ENCODE measurements at regions of chr10 and their contacts with region 1.

Region 1: DNA sequence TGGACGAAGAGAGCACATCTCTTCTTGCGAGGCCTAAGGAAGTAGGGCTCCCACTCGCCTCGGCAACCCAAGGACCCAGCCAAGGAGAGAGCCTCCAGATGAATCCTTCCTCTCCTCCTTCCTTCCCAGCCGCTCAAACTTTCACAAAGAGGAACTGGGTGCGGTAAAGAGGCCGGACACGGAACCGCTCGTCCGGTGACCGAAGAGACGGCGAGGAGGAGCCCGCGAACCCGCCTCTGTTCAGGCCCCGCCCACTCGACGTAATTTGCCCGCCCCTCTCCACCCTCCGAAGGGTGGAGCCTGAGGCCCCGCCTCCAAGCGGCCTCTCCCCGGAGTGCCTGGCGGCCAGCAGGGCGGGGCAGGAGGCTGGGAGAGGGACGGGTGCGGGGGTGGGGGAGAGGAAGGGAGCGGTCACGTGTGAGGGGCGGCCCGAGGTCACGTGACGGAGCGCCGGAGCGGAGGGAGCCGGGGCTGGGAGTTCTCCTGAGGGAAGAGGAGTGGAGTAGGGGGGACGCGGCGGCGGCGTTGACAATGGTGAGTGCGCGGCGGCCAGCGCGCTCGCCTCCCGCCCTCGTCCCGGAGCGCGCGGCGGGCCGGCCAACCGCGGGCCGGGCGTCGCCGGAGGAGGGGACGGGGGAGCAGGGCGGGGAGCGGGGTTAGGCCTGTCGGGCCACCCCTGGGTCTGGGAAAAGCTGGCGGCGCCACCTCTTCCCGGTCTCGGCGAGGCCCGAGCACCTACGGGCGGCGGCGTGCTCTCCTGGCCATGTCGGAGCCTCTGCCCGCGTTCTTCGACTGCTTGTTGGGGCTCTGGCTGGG is at the start of gene VPS26A:
- DNase-seq: peak; percentile 97 to 100 (median 99)
- ATAC-seq: peak; percentile 99
- H3K4me3 ChIP-seq: peak within 1 kb of the TSS; percentile 85
- H3K4me3 Mint-ChIP-seq: peak within 1 kb of the TSS; percentile 93 to 99 (median 96)
- H3K27ac ChIP-seq: peak within 1 kb of the TSS; percentile 94
- H3K27ac Mint-ChIP-seq: peak within 1 kb of the TSS; percentile 92 to 98 (median 97)
- H3K4me1 ChIP-seq: peaks cover 8 to 16% of the 10 kb centered on the region in 2 donors
- H3K4me1 Mint-ChIP-seq: peaks cover 5 to 37% (median 35%) of the 10 kb centered on the region in 7 donors
- H3K27me3 ChIP-seq: no peaks in the 10 kb centered on the region
- H3K27me3 Mint-ChIP-seq: no peaks in the 10 kb centered on the region
- total RNA-seq, gene VPS26A: 25.5 to 35.0 (median 29.5) TPM

Region 2: GRCh38 chr10:68406815-68407548 is 717.0 kb before region 1 on chr10 and contains the start of gene RUFY2:
- CTCF ChIA-PET with region 1: no interaction called
- POLR2A ChIA-PET with region 1: no interaction called
- intact Hi-C with region 1: loop called in 1 of 2 experiments (anchors 5 kb)
- DNase-seq: peak; percentile 61 to 91 (median 74)
- ATAC-seq: peak; percentile 98
- H3K4me3 ChIP-seq: peak within 1 kb of the TSS; percentile 73
- H3K4me3 Mint-ChIP-seq: peak within 1 kb of the TSS; percentile 85 to 96 (median 89)
- H3K27ac ChIP-seq: peak within 1 kb of the TSS; percentile 76
- H3K27ac Mint-ChIP-seq: peak within 1 kb of the TSS; percentile 62 to 90 (median 81)
- H3K4me1 ChIP-seq: peaks cover 3 to 7% of the 10 kb centered on the region in 2 donors
- H3K4me1 Mint-ChIP-seq: peaks cover 10 to 19% (median 17%) of the 10 kb centered on the region in 7 donors
- H3K27me3 ChIP-seq: no peaks in the 10 kb centered on the region
- H3K27me3 Mint-ChIP-seq: no peaks in the 10 kb centered on the region
- total RNA-seq, gene RUFY2: 15.1 to 24.7 (median 20.4) TPM

Region 3: DNA sequence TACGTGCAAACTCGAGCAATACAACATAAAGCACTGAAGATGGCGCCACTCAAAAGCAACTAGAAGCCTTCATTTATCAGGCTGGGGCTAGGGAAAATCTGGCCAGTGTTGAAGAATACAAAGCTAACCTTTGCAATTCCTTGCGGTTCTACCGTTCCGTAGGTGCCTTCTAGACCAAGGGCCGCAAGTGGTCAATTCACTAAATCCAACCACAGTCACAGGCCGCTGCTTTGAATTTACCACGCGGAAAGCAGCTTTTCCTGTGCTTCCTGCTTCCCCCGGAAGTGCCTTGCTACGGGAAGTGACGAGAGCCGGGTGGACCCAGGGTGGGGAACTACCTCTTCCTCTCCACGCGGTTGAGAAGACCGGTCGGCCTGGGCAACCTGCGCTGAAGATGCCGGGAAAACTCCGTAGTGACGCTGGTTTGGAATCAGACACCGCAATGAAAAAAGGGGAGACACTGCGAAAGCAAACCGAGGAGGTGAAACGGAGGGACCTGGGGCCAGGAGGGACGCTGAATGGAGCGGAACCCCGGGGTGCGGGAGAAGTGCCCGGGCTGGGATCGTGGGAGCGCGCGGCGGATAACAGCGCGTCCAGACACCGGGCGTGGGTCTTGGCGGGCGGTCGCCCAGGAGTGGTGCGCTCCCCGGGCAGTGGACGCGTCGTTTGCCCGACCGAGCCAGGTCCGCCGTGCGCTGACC is 168.0 kb before region 1 on chr10 and contains the start of gene DDX21:
- CTCF ChIA-PET with region 1: no interaction called
- POLR2A ChIA-PET with region 1: interaction called, 6 read pairs
- intact Hi-C with region 1: loop called (anchors 1 kb)
- DNase-seq: peak; percentile 70 to 94 (median 89)
- ATAC-seq: peak; percentile 89
- H3K4me3 ChIP-seq: peak within 1 kb of the TSS; percentile 71
- H3K4me3 Mint-ChIP-seq: peak within 1 kb of the TSS; percentile 91 to 100 (median 98)
- H3K27ac ChIP-seq: peak within 1 kb of the TSS; percentile 97
- H3K27ac Mint-ChIP-seq: peak within 1 kb of the TSS; percentile 96 to 100 (median 99)
- H3K4me1 ChIP-seq: peaks cover 7 to 11% of the 10 kb centered on the region in 2 donors
- H3K4me1 Mint-ChIP-seq: peaks cover 15 to 53% (median 33%) of the 10 kb centered on the region in 7 donors
- H3K27me3 ChIP-seq: no peaks in the 10 kb centered on the region
- H3K27me3 Mint-ChIP-seq: no peaks in the 10 kb centered on the region
- total RNA-seq, gene DDX21: 43.5 to 101 (median 86.7) TPM

Region 4: DNA sequence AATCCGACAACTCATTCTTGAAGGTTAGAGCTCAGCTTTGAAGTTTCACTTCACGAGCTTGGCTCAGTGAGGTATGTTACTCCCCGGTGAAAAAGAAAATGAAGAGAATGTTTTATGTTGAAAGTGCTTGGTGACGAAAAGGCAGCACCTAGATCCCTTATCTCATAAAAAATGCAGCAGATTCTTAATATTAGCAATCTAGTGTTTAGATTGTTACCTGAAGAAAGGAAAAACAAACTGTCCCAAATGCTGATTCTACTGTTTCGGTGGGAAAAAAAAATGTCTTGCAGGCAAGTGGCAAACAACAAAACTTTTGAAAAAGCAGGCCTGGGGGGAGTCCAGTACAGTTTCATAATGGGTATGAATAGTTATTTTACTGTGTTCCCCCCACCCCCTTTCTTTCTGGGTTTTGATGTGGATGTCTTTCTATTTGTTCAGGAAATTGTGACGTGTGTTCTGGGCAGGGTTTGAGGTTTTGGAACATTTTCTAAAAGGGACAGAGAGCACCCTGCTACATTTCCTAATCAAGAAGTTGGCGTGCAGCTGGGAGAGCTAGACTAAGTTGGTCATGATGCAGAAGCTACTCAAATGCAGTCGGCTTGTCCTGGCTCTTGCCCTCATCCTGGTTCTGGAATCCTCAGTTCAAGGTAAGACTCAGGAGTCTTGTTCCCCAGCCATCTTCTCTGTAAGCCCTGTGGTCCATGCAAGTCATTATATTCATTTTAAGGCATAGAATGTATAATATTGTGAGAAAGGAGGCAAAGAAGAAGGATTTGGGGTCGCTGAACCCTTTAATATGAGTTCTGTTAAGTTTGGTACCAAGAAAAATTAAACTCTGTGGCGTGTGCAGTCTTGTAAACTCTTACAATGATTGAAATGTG is 36.1 kb before region 1 on chr10 and contains the start of gene SRGN:
- CTCF ChIA-PET with region 1: no interaction called
- POLR2A ChIA-PET with region 1: interaction called, 5 read pairs
- intact Hi-C with region 1: loop called (anchors 1 kb)
- DNase-seq: peak; percentile 54 to 94 (median 87)
- ATAC-seq: peak; percentile 76
- H3K4me3 ChIP-seq: peak within 1 kb of the TSS; percentile 84
- H3K4me3 Mint-ChIP-seq: peak within 1 kb of the TSS; percentile 85 to 95 (median 93)
- H3K27ac ChIP-seq: peak within 1 kb of the TSS; percentile 97
- H3K27ac Mint-ChIP-seq: peak within 1 kb of the TSS; percentile 93 to 99 (median 98)
- H3K4me1 ChIP-seq: peaks cover 28 to 46% of the 10 kb centered on the region in 2 donors
- H3K4me1 Mint-ChIP-seq: peaks cover 25 to 66% (median 58%) of the 10 kb centered on the region in 7 donors
- H3K27me3 ChIP-seq: no peaks in the 10 kb centered on the region
- H3K27me3 Mint-ChIP-seq: no peaks in the 10 kb centered on the region
- total RNA-seq, gene SRGN: 66.6 to 748 (median 227) TPM

Region 5: GRCh38 chr10:69179743-69180524 is 56.0 kb after region 1 on chr10 and contains the start of gene SUPV3L1:
- CTCF ChIA-PET with region 1: interaction called, 6 read pairs
- POLR2A ChIA-PET with region 1: interaction called, 5 read pairs
- intact Hi-C with region 1: loop called (anchors 1 kb)
- DNase-seq: peak; percentile 72 to 91 (median 87)
- ATAC-seq: peak; percentile 87
- H3K4me3 ChIP-seq: peak within 1 kb of the TSS; percentile 83
- H3K4me3 Mint-ChIP-seq: peak within 1 kb of the TSS; percentile 85 to 98 (median 96)
- H3K27ac ChIP-seq: peak within 1 kb of the TSS; percentile 95
- H3K27ac Mint-ChIP-seq: peak within 1 kb of the TSS; percentile 98 to 100 (median 99)
- H3K4me1 ChIP-seq: peaks cover 12 to 15% of the 10 kb centered on the region in 2 donors
- H3K4me1 Mint-ChIP-seq: peaks cover 22 to 55% (median 38%) of the 10 kb centered on the region in 7 donors
- H3K27me3 ChIP-seq: no peaks in the 10 kb centered on the region
- H3K27me3 Mint-ChIP-seq: no peaks in the 10 kb centered on the region
- total RNA-seq, gene SUPV3L1: 39.3 to 63.2 (median 42.1) TPM

Region 6: DNA sequence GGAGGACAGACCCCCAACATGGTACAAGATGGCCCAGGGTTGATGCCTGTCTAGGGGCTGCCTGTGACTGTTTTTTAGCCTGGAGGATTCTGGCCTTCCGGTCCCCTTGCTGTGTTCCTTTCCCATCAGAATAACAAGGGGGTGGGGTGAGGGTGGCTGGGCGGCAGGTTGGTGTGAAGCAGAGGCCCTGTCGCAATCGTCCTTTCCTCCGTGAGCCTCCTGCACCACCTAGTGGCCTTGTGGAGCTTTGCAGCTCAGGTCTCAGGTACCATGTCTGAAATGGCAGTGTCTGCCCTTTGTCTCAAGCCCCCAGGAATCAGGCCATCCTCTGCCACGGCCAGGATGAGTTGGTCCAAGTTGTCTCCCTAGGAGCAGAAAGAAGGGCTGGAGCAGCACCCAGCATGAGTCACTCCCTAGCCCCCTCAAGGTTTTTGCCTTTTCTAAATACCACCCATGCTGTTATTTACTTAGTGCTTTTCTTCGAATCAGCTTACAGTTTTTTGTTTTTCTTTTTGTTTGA is 268.6 kb after region 1 on chr10:
- CTCF ChIA-PET with region 1: no interaction called
- POLR2A ChIA-PET with region 1: no interaction called
- intact Hi-C with region 1: loop called in 1 of 2 experiments (anchors 1 kb)
- DNase-seq: peak; percentile 57 to 85 (median 81)
- ATAC-seq: peak; percentile 99
- H3K4me3 ChIP-seq: no peak overlapping the region
- H3K4me3 Mint-ChIP-seq: no peak overlapping the region
- H3K27ac ChIP-seq: peak overlapping the region; percentile 44
- H3K27ac Mint-ChIP-seq: peak overlapping the region; percentile 56 to 93 (median 84)
- H3K4me1 ChIP-seq: peaks cover 4 to 6% of the 10 kb centered on the region in 2 donors
- H3K4me1 Mint-ChIP-seq: peaks cover 8 to 35% (median 20%) of the 10 kb centered on the region in 7 donors
- H3K27me3 ChIP-seq: no peaks in the 10 kb centered on the region
- H3K27me3 Mint-ChIP-seq: no peaks in the 10 kb centered on the region